ENCODE measurements at regions of chr12 and their contacts with region 1.

Region 1: DNA sequence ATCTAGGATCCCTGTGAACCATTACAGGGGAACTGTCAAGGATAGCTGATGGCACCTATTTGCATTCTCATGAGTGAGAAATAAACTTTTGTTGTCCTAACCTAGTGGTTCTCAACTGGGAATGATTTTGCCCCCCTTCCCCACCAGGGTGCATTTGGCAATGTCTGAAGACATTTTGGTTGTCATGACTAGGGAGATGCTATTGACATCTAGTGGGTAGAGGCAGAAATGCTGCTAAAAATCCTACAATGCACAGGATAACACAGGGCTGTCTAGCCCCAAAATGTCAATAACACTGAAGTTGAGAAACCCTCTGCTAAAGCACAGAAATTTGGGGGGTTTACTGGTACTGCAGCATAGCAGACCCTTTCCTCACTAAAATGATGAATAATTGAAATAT is 140.9 kb upstream of the SRRM4 start:
- DNase-seq: no peak
- H3K4me3 ChIP-seq: no peak overlapping the region
- H3K27ac ChIP-seq: no peak overlapping the region
- H3K4me1 ChIP-seq: no peaks in the 10 kb centered on the region
- H3K27me3 ChIP-seq: peaks cover 0 to 2% (median 0%) of the 10 kb centered on the region in 4 experiments; a peak in 2 of 7 replicates
- CTCF ChIP-seq: peak in 2 of 3 experiments; percentile 78 to 93; a peak in 3 of 4 replicates
- EP300 ChIP-seq: no peak
- POLR2A ChIP-seq: no peak
- RAD21 ChIP-seq: peak; percentile 82 to 91

Region 2: DNA sequence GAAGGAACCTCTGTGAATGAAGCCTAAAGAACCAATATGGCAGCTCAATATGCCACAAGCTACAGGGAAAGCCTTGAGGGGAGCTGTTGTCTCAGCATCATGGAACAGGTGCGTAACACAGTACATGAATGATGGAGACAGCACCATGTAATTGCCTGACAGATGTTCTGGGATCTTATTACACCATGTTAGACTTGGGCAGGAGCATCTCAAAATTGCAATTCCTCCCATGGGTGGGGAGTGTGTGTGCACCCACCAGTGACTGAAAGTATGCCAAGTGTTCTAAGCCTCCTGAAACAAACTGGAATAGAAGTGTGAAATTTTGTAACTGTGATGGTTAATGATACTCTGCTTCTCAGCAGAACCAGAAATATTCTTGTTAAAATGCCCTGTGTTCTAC is 10.1 kb before region 1 on chr12:
- CTCF ChIA-PET with region 1: interaction called, 17 read pairs
- POLR2A ChIA-PET with region 1: no interaction called
- DNase-seq: no peak
- H3K4me3 ChIP-seq: no peak overlapping the region
- H3K27ac ChIP-seq: no peak overlapping the region
- H3K4me1 ChIP-seq: peaks cover 0 to 3% (median 0%) of the 10 kb centered on the region in 4 experiments; a peak in 1 of 7 replicates
- H3K27me3 ChIP-seq: no peaks in the 10 kb centered on the region
- CTCF ChIP-seq: no peak
- EP300 ChIP-seq: no peak
- POLR2A ChIP-seq: no peak
- RAD21 ChIP-seq: no peak

Region 3: GRCh38 chr12:118874698-118875548 is 34.5 kb after region 1 on chr12:
- CTCF ChIA-PET with region 1: no interaction called
- POLR2A ChIA-PET with region 1: no interaction called
- DNase-seq: peak; percentile 57 to 65
- H3K4me3 ChIP-seq: peak overlapping the region in 3 of 4 experiments; percentile 5 to 46 (median 25); a peak in 3 of 8 replicates
- H3K27ac ChIP-seq: peak overlapping the region; percentile 77; the same call in 1 of the 2 replicates
- H3K4me1 ChIP-seq: peaks cover 6 to 16% (median 13%) of the 10 kb centered on the region in 4 experiments
- H3K27me3 ChIP-seq: no peaks in the 10 kb centered on the region; a peak in 1 of 7 replicates
- CTCF ChIP-seq: no peak
- EP300 ChIP-seq: no peak
- POLR2A ChIP-seq: peak in 1 of 2 experiments; percentile 35; a peak in 1 of 3 replicates
- RAD21 ChIP-seq: no peak

Region 4: DNA sequence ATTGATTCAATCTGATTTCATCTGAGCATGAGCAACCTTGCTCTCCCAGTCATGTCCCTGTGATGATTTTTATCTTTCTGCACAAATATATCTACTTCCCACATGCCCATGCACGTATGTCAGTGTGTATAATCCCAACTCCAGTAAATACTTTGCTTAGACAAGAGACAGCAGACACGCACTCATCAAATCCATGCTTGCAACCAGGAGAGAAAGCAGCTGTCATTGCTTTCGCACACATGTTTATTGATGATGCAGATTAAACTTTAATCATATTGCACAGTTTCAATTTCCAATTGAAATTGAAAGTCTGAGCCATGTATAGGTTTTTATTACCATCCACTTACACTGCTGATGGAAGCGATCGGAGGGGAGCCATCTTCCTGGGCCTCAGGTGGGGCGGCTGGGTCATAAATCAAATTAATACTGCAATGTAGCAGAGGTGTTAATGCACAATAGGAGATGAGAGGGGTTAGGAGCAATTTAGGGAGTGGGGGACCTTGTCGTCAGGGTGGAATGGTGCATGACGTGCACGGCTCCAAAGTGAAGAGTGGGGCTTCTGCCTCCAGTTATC is 72.4 kb after region 1 on chr12:
- CTCF ChIA-PET with region 1: no interaction called
- POLR2A ChIA-PET with region 1: no interaction called
- DNase-seq: no peak
- H3K4me3 ChIP-seq: no peak overlapping the region
- H3K27ac ChIP-seq: no peak overlapping the region
- H3K4me1 ChIP-seq: no peaks in the 10 kb centered on the region
- H3K27me3 ChIP-seq: no peaks in the 10 kb centered on the region
- CTCF ChIP-seq: no peak
- EP300 ChIP-seq: no peak
- POLR2A ChIP-seq: no peak
- RAD21 ChIP-seq: no peak